ENCODE measurements at regions of chr3 and their contacts with region 1.

Region 1: DNA sequence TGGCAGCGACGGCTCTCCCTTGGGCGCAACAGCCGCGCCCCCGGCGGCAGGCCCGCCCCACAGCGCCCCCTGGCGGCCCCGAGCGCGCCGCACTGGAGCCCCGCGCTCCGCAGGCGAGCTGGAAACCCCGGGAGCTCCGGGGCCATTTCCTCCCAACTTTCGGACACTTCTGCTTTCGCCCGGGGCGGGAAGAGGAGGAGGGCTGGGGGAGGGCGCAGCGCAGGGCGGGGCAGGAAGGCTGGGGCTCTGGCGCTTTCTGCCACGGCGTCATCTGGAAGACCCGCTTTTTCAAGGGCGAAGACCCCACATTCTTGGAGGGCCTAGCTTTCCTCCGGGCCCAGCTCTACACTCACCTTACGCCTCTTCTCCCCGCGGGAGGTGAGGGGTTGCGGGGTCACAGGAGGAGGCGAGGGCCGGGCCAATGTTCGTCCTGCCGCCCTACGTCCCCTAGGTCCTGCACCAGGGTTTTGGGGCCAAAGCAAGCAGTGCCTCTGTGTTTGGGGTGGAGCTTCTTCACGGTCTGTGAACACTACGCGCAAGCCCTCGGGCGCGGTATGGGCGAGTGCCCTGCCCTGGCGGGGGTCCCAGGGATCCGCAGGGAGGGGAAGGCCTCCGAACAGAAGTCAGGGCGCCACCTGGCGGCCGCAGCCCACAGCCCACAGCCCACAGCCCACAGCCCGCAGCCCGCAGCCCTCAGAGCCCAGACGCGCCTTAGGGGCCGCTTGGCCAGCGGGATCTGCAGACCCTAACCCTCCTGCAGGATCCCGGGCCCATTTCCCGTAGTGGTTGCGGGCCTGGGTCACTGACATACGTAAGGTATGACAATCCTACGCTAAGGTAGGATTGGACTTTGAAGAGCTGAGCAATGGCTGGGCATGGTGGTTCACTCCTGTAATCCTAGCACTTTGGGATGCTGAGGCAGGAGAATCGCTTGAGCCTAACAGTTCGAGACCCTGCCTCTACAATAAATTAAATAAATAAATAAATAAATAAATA is 31.1 kb downstream of the FOXL2 start:
- DNase-seq: peak; percentile 99
- H3K4me3 Mint-ChIP-seq: peak overlapping the region; percentile 71
- H3K27ac Mint-ChIP-seq: peak overlapping the region; percentile 53
- H3K4me1 Mint-ChIP-seq: peaks cover 19% of the 10 kb centered on the region
- H3K27me3 Mint-ChIP-seq: no peaks in the 10 kb centered on the region
- CTCF ChIP-seq: peak; percentile 94

Region 2: GRCh38 chr3:138417559-138417982 is 498.2 kb before region 1 on chr3:
- CTCF ChIA-PET with region 1: interaction called, 12 read pairs
- intact Hi-C with region 1: no loop called
- DNase-seq: peak; percentile 94
- H3K4me3 Mint-ChIP-seq: no peak overlapping the region
- H3K27ac Mint-ChIP-seq: no peak overlapping the region
- H3K4me1 Mint-ChIP-seq: no peaks in the 10 kb centered on the region
- H3K27me3 Mint-ChIP-seq: peaks cover 59% of the 10 kb centered on the region
- CTCF ChIP-seq: peak; percentile 90

Region 3: DNA sequence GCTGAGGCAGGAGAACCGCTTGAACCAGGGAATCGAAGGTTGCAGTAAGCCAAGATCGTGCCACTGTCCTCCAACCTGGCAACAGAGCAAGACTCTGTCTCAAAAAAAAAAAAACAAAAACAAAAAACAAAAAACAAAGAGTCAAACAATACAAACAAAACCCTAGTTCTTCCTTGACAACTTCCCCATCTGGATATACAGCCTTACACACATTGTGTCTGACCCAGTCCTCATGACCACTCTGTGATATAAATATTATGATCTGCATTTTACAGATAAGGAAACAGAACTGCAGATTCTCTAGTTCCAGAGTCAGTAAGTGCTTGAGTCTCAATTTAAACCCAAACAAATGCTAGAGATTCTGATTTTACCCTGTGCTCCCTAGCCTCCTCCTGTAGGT is 486.1 kb before region 1 on chr3:
- CTCF ChIA-PET with region 1: no interaction called
- intact Hi-C with region 1: no loop called
- DNase-seq: no peak
- H3K4me3 Mint-ChIP-seq: no peak overlapping the region
- H3K27ac Mint-ChIP-seq: no peak overlapping the region
- H3K4me1 Mint-ChIP-seq: peaks cover 13% of the 10 kb centered on the region
- H3K27me3 Mint-ChIP-seq: peaks cover 40% of the 10 kb centered on the region
- CTCF ChIP-seq: no peak

Region 4: DNA sequence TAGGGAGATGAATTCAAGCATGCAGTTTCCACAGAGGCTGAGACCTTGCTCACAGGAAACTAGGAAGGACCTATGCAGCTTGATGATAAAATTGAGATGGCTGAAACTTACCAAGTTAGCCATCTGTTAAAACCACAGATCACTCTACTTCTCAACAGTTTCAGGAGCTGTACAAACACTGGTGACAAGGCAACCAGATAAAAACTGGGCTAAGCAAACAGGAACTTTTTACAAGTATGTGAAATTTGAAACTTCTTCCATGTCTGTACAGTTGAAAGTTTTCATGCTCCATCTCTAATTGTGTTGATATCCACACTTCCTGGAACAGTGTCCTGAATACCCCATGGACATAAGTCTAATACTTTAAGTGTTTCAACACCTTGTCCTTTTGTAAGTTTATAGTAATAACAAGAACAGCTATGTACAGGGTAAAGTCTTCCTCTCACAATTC is 229.0 kb before region 1 on chr3:
- CTCF ChIA-PET with region 1: interaction called, 13 read pairs
- intact Hi-C with region 1: no loop called
- DNase-seq: peak; percentile 34
- H3K4me3 Mint-ChIP-seq: no peak overlapping the region
- H3K27ac Mint-ChIP-seq: peak overlapping the region; percentile 40
- H3K4me1 Mint-ChIP-seq: peaks cover 15% of the 10 kb centered on the region
- H3K27me3 Mint-ChIP-seq: no peaks in the 10 kb centered on the region
- CTCF ChIP-seq: no peak

Region 5: DNA sequence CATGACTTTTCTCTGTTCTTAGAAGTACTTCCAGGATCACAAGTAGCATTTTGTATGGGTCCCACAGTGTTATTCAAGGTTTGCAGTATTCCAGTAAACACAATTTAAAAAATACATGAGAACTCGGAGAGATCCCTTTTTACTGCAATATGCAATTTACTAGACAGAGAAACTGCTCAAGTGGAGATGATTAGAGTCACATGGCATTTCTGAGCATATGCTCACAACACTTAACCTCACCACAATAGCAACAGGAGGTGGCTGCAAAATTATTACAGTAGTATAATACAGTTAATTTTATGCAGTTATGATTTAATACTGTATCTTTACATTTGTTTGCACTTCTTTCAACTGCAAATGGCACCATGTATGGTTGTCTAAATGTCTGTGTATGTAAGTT is 168.6 kb before region 1 on chr3:
- CTCF ChIA-PET with region 1: no interaction called
- intact Hi-C with region 1: no loop called
- DNase-seq: no peak
- H3K4me3 Mint-ChIP-seq: no peak overlapping the region
- H3K27ac Mint-ChIP-seq: no peak overlapping the region
- H3K4me1 Mint-ChIP-seq: no peaks in the 10 kb centered on the region
- H3K27me3 Mint-ChIP-seq: no peaks in the 10 kb centered on the region
- CTCF ChIP-seq: no peak

Region 6: DNA sequence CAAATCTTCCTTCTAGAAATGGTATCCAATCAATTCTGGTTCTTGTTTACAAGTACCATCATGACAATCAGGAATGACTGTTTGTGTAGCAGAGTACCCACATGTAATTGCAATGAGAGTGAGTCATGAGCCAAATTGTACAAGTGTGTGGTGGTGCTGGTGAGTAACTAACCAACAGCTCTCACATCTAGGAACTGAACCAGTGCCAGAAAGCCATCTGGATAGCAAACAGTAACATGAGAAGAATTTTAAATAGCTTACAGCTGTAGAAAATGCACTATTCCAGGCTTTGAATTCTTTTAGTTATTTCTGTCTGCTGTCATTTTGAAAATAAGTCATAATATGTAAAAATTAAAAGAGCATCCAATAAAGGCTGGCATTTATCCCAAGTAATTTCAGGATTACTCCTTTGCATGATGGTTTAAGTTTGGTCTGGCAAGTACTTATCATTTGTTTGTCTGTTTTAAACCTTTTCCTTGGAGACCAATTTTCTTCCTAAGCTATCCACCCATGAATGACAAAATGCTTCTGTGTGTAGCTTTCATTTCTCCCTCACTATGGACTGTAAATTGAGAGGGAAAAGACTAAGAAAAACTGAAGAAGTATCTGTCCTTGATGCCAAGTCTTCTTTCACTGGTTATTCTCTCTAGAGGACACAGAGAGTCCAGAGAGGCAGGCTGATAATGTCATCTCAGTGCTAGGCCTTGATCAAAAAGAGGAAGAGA is 141.1 kb before region 1 on chr3:
- CTCF ChIA-PET with region 1: interaction called, 16 read pairs
- intact Hi-C with region 1: loop called (anchors 1 kb)
- DNase-seq: peak; percentile 71
- H3K4me3 Mint-ChIP-seq: no peak overlapping the region
- H3K27ac Mint-ChIP-seq: no peak overlapping the region
- H3K4me1 Mint-ChIP-seq: peaks cover 19% of the 10 kb centered on the region
- H3K27me3 Mint-ChIP-seq: no peaks in the 10 kb centered on the region
- CTCF ChIP-seq: no peak

Region 7: GRCh38 chr3:138834359-138835212 is 81.2 kb before region 1 on chr3 and contains the start of gene PIK3CB:
- CTCF ChIA-PET with region 1: interaction called, 19 read pairs
- intact Hi-C with region 1: loop called (anchors 1 kb)
- DNase-seq: peak; percentile 99
- H3K4me3 Mint-ChIP-seq: peak within 1 kb of the TSS; percentile 82
- H3K27ac Mint-ChIP-seq: peak within 1 kb of the TSS; percentile 94
- H3K4me1 Mint-ChIP-seq: peaks cover 30% of the 10 kb centered on the region
- H3K27me3 Mint-ChIP-seq: no peaks in the 10 kb centered on the region
- CTCF ChIP-seq: no peak
- total RNA-seq, gene PIK3CB: 52.6 and 59.3 TPM in 2 replicates

Region 8: GRCh38 chr3:138890555-138891187 is 25.1 kb before region 1 on chr3:
- CTCF ChIA-PET with region 1: interaction called, 13 read pairs
- intact Hi-C with region 1: no loop called
- DNase-seq: no peak
- H3K4me3 Mint-ChIP-seq: no peak overlapping the region
- H3K27ac Mint-ChIP-seq: no peak overlapping the region
- H3K4me1 Mint-ChIP-seq: peaks cover 12% of the 10 kb centered on the region
- H3K27me3 Mint-ChIP-seq: no peaks in the 10 kb centered on the region
- CTCF ChIP-seq: no peak